Activated CD4-positive, alpha-beta memory T cell treated with anti-CD3 and anti-CD28 coated beads, Interleukin-2, amount 10 ng/mL, durations not matched to agents 7 days and 5 days (primary cell): ENCODE measurements at regions of chr1 and their contacts with region 1.

Region 1: DNA sequence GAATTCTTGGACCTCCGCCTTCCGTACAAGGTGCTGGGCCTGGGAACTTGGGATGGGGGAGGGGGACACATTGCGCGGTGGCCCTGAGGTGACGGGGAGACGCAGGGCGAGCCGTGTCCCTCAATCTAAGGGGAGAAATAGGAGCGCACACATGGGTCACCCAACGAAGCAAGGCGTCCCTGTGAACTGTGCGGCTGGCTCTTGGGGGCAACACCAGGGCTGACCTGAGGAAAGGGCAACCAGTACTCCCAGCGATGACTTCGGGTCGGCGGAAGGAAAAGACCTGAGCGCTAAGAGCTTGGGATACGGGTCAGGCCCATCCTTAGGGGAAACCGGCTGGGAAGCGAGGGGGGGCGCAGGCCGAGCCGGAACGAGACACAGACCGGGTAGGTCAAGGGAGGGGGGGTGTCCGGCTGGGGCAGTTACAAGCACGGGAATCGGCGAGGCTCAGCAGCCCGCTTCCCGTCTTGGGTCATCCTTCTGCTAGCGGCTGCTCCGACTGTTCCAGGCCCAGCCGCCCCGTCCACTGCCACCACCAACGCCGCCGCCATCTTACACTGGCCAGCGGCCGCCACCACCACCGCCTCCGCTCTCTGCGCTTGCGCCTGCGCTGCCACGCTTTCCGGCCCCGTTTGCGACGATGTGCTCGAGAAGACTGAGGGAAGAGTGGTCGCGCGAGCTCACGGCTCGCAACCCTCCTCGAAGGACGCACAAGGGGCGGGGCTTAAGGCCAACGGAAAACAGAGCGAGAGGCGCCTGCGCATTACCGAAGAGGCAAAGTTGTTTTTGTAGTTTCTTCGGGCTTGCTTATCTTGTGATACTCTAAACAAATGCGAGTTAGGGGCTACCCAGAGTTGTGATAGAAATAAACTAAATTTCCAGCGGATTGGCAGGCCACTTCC is at the start of gene DCAF8:
- DNase-seq: peak; percentile 98
- H3K4me3 Mint-ChIP-seq: peak within 1 kb of the TSS; percentile 92
- H3K27ac Mint-ChIP-seq: peak within 1 kb of the TSS; percentile 99
- H3K4me1 Mint-ChIP-seq: peaks cover 51% of the 10 kb centered on the region
- H3K27me3 Mint-ChIP-seq: no peaks in the 10 kb centered on the region
- total RNA-seq, gene DCAF8: 123 to 125 TPM

Region 2: GRCh38 chr1:160098852-160099561 is 163.1 kb before region 1 on chr1:
- CTCF ChIA-PET with region 1: interaction called, 10 read pairs
- POLR2A ChIA-PET with region 1: interaction called, 8 read pairs
- DNase-seq: peak; percentile 98
- H3K4me3 Mint-ChIP-seq: peak overlapping the region; percentile 69
- H3K27ac Mint-ChIP-seq: peak overlapping the region; percentile 75
- H3K4me1 Mint-ChIP-seq: peaks cover 38% of the 10 kb centered on the region
- H3K27me3 Mint-ChIP-seq: no peaks in the 10 kb centered on the region

Region 3: DNA sequence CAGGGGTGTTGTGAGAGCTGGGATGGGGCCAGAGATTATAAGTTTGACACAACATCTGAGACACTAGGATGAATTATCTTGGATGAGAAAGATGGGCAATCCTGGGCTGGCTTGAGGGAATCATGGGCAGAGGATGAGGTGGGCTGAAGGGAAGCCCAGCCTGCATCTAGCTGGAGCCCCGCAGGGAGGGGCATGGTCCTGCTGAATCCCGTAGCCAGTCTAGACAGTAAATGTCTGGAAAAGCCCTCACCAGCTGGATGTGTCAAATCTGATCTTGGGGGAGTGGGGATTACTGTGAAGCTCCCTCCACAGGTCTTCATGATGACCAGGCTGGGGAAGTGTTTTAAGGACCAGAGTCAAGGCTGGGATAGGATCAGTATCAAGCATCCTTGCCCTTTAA is 75.4 kb before region 1 on chr1:
- CTCF ChIA-PET with region 1: no interaction called
- POLR2A ChIA-PET with region 1: no interaction called
- DNase-seq: no peak
- H3K4me3 Mint-ChIP-seq: no peak overlapping the region
- H3K27ac Mint-ChIP-seq: no peak overlapping the region
- H3K4me1 Mint-ChIP-seq: no peaks in the 10 kb centered on the region
- H3K27me3 Mint-ChIP-seq: peaks cover 10% of the 10 kb centered on the region

Region 4: DNA sequence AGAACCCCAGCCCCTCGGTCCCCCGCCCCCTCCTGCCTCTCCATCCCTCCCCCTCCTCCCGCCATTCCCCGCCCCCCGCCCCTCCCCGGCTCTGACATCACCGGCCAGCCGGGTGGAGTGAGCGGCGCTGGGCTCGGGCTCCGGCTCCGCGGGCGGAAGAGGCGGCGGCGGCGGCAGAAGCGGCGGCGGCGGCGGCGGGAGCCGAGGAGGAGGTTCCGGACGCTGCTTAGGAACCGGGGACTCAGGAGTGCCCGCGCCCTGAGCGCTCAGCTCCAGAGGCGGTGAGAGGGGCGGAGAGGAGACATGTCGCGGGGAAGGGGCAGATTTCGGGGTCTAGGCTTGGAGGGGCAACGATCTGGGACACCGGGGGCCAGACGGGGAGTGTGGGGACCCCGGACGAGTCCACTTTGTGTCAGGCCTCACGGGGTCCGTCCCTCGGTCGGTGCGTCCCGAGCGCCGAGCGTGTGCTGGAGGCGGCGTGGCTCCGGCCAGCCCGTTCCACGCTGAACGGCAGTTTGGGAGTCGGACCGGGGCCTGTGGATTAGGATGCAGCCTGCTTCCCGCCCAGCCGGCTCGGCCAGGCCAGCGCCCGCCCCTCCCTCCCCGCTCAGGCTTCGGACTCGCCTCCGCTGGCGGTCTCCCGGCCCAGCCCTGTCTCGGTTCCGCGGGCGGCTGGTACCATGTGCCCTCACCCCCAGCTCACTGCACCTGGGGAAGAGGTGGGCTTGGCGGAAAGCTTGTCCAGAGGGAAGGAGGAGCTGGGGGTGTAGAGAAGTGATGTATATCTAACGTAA is 56.7 kb before region 1 on chr1 and contains the start of gene PEA15:
- CTCF ChIA-PET with region 1: no interaction called
- POLR2A ChIA-PET with region 1: interaction called, 27 read pairs
- DNase-seq: peak; percentile 76
- H3K4me3 Mint-ChIP-seq: peak within 1 kb of the TSS; percentile 86
- H3K27ac Mint-ChIP-seq: peak within 1 kb of the TSS; percentile 81
- H3K4me1 Mint-ChIP-seq: peaks cover 44% of the 10 kb centered on the region
- H3K27me3 Mint-ChIP-seq: no peaks in the 10 kb centered on the region
- total RNA-seq, gene PEA15: 38.2 to 39.3 TPM

Region 5: GRCh38 chr1:160243767-160244166 is 18.4 kb before region 1 on chr1:
- CTCF ChIA-PET with region 1: no interaction called
- POLR2A ChIA-PET with region 1: interaction called, 11 read pairs
- DNase-seq: no peak
- H3K4me3 Mint-ChIP-seq: no peak overlapping the region
- H3K27ac Mint-ChIP-seq: no peak overlapping the region
- H3K4me1 Mint-ChIP-seq: no peaks in the 10 kb centered on the region
- H3K27me3 Mint-ChIP-seq: no peaks in the 10 kb centered on the region

Region 6: GRCh38 chr1:160277330-160277729 is 15.2 kb after region 1 on chr1:
- CTCF ChIA-PET with region 1: interaction called, 3 read pairs
- POLR2A ChIA-PET with region 1: interaction called, 11 read pairs
- DNase-seq: no peak
- H3K4me3 Mint-ChIP-seq: no peak overlapping the region
- H3K27ac Mint-ChIP-seq: no peak overlapping the region
- H3K4me1 Mint-ChIP-seq: no peaks in the 10 kb centered on the region
- H3K27me3 Mint-ChIP-seq: no peaks in the 10 kb centered on the region

Region 7: GRCh38 chr1:160284782-160285344 is 22.7 kb after region 1 on chr1 and contains the start of gene PEX19:
- CTCF ChIA-PET with region 1: interaction called, 9 read pairs
- POLR2A ChIA-PET with region 1: interaction called, 89 read pairs
- DNase-seq: peak; percentile 96
- H3K4me3 Mint-ChIP-seq: peak within 1 kb of the TSS; percentile 100
- H3K27ac Mint-ChIP-seq: peak within 1 kb of the TSS; percentile 91
- H3K4me1 Mint-ChIP-seq: peaks cover 21% of the 10 kb centered on the region
- H3K27me3 Mint-ChIP-seq: no peaks in the 10 kb centered on the region
- total RNA-seq, gene PEX19: 53.8 to 60.8 TPM

Region 8: GRCh38 chr1:160325252-160325651 is 63.1 kb after region 1 on chr1:
- CTCF ChIA-PET with region 1: no interaction called
- POLR2A ChIA-PET with region 1: no interaction called
- DNase-seq: no peak
- H3K4me3 Mint-ChIP-seq: no peak overlapping the region
- H3K27ac Mint-ChIP-seq: peak overlapping the region; percentile 31
- H3K4me1 Mint-ChIP-seq: peaks cover 2% of the 10 kb centered on the region
- H3K27me3 Mint-ChIP-seq: no peaks in the 10 kb centered on the region